GM12878 (cell line): ENCODE measurements at regions of chr2 and their contacts with region 1.

Region 1: GRCh38 chr2:26964446-26965130 is 5.8 kb upstream of the MAPRE3 start:
- DNase-seq: no peak
- ATAC-seq: no peak
- H3K4me3 ChIP-seq: no peak overlapping the region
- H3K27ac ChIP-seq: no peak overlapping the region
- H3K4me1 ChIP-seq: no peaks in the 10 kb centered on the region
- H3K27me3 ChIP-seq: peaks cover 1 to 2% of the 10 kb centered on the region in 2 experiments; a peak in 1 of 4 replicates
- CTCF ChIP-seq: no peak
- EP300 ChIP-seq: no peak
- POLR2A ChIP-seq: no peak
- RAD21 ChIP-seq: no peak

Region 2: GRCh38 chr2:26712486-26713465 is 251.8 kb before region 1 on chr2:
- CTCF ChIA-PET with region 1: no interaction called
- POLR2A ChIA-PET with region 1: no interaction called
- RAD21 ChIA-PET with region 1: no interaction called
- SMC1A ChIA-PET with region 1: no interaction called
- in situ Hi-C with region 1: no loop called
- intact Hi-C with region 1: no loop called
- DNase-seq: no peak
- ATAC-seq: no peak
- H3K4me3 ChIP-seq: no peak overlapping the region
- H3K27ac ChIP-seq: no peak overlapping the region
- H3K4me1 ChIP-seq: no peaks in the 10 kb centered on the region
- H3K27me3 ChIP-seq: peaks cover 0 to 1% of the 10 kb centered on the region in 2 experiments; a peak in 1 of 4 replicates
- CTCF ChIP-seq: no peak
- EP300 ChIP-seq: no peak
- POLR2A ChIP-seq: no peak
- RAD21 ChIP-seq: no peak

Region 3: GRCh38 chr2:26954135-26954534 is 10.5 kb before region 1 on chr2:
- CTCF ChIA-PET with region 1: interaction called, 13 read pairs
- POLR2A ChIA-PET with region 1: no interaction called
- RAD21 ChIA-PET with region 1: interaction called, 3 read pairs
- SMC1A ChIA-PET with region 1: interaction called, 4 read pairs
- in situ Hi-C with region 1: no loop called
- intact Hi-C with region 1: no loop called
- DNase-seq: no peak
- ATAC-seq: no peak
- H3K4me3 ChIP-seq: no peak overlapping the region
- H3K27ac ChIP-seq: no peak overlapping the region
- H3K4me1 ChIP-seq: no peaks in the 10 kb centered on the region
- H3K27me3 ChIP-seq: peaks cover 2 to 4% of the 10 kb centered on the region in 2 experiments; a peak in 2 of 4 replicates
- CTCF ChIP-seq: no peak
- EP300 ChIP-seq: no peak
- POLR2A ChIP-seq: no peak
- RAD21 ChIP-seq: no peak